GM23248 (cell line): ENCODE measurements at regions of chr2 and their contacts with region 1.

Region 1: DNA sequence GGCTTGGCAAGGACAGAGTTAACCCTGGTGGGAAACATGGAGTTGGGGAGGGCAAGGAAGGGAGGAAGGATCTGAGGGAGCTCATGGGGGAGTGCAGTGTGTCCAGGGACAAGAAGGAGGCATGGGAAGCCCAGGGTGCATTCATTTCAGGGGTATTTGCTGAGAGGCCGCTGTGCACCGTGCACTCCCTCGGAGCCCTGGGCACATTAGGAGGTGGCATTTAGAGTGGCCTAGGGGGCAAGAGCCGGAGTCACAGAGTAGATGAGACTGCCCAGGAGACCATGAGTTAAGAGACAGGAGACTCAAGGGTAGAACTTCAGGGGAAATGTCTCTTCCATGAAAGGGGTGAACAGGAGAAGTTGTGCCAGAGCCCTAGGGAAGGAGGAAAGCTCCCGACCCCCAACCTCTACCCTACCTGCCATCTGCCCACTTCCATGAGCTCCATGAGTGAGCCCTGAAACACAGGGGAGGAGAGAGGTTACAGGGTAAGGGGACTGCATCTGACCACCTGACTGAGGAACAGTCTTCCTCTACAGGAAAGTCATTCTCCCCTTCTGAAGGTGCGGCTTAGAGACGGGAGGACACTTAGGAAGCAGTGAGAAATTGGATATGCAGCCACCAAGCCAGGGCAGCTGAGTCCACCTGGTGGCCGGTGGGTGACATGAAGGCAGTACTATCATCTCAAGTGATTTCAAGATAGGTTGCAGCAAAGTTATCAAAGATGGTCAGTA is 58.5 kb upstream of the COPS8 start:
- DNase-seq: peak; percentile 85
- H3K4me3 ChIP-seq: no peak overlapping the region
- H3K27ac ChIP-seq: no peak overlapping the region
- H3K4me1 ChIP-seq: peaks cover 10% of the 10 kb centered on the region
- H3K27me3 ChIP-seq: no peaks in the 10 kb centered on the region

Region 2: GRCh38 chr2:236512902-236513435 is 514.2 kb before region 1 on chr2:
- in situ Hi-C with region 1: loop called (anchors 25 kb)
- DNase-seq: peak; percentile 67
- H3K4me3 ChIP-seq: no peak overlapping the region
- H3K27ac ChIP-seq: no peak overlapping the region
- H3K4me1 ChIP-seq: no peaks in the 10 kb centered on the region
- H3K27me3 ChIP-seq: peaks cover 24% of the 10 kb centered on the region; the same call in 1 of the 2 replicates

Region 3: DNA sequence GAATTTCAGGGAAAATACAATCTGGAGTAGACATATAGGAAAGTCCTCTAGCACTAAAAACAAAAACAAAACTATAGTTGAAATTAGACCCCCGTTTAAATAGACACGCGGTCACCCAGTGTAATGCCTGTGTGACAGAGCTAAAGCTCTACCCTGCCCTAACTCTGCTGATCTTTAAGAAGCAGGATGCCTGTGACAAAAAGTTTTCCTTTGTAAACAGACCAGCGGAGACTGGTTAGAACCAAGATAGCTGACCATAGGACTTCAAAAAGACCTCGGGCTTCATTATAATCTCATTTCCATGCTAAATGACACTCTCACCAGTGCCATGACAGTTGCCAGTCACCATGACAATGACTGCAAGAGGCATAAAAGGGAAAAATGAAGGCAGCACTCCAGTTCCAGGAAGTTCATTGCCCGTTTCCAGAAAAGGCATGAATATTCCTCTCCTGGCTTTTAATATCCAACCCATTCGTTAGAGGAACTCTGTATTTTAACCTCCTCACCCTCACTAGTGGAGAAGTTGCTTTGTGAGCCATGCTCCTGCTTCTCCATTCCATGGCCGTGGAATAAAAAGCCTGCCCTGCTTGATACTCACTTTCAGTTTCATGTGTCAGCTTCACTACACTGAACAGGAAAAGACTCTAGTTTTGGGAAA is 98.6 kb before region 1 on chr2:
- in situ Hi-C with region 1: no loop called
- DNase-seq: peak; percentile 42
- H3K4me3 ChIP-seq: peak overlapping the region; percentile 68
- H3K27ac ChIP-seq: no peak overlapping the region
- H3K4me1 ChIP-seq: no peaks in the 10 kb centered on the region
- H3K27me3 ChIP-seq: peaks cover 2% of the 10 kb centered on the region

Region 4: DNA sequence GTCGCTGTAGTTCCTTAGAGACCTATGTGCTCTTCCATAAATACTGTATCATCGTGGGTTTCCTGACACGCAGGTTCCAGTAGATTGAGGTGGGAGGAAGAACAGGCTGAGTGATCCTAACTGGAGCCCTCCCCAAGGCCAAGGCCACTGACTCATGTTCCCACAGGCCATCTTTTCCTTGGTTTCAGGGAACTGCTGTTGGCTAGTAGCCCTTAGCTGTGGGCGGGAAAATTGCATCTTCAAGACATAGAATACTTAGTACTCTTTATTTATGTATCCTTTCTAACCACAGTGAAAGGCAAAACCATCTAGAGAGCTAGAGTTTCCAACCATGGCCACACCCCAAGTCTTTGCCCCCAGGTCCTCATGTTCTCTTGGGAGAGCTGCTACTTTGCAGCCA is 114.4 kb after region 1 on chr2:
- in situ Hi-C with region 1: no loop called
- DNase-seq: peak; percentile 90
- H3K4me3 ChIP-seq: no peak overlapping the region
- H3K27ac ChIP-seq: peak overlapping the region; percentile 84
- H3K4me1 ChIP-seq: peaks cover 31% of the 10 kb centered on the region
- H3K27me3 ChIP-seq: no peaks in the 10 kb centered on the region

Region 5: DNA sequence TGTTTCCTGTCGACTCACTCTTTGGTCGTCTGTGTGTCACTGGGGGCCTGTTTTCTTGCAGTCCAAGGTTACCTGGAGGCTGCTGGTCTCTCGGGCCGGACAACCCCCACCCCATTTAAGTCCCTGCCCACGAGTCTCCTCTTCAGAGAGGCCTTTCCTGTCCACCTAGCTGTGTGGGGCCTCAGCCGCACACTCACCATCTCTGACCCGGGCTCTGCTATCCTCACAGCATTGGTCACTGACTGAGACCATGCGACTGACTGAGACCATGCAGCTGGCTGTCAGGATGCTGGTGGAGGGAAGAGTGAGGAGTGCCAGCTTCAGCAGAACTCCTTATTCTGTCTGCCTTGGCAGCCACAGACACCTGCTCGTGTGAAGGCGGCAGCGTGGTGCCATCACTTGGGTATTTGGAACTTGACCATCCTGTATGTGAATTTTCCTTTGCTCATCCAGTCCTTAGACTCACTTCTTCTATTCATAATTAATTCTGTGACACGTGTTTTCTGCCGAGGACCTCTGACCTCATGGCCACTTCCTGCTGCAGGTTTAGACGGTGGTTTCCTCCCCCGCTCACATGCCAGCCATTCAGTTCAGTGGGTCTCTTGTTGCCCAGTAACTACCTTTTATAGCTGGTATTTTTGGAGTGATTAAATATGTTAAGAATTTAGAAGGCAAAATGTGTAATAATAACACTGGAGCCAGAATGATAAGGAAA is 1352.1 kb after region 1 on chr2:
- in situ Hi-C with region 1: no loop called
- DNase-seq: peak; percentile 32
- H3K4me3 ChIP-seq: no peak overlapping the region
- H3K27ac ChIP-seq: no peak overlapping the region
- H3K4me1 ChIP-seq: peaks cover 13% of the 10 kb centered on the region
- H3K27me3 ChIP-seq: no peaks in the 10 kb centered on the region